ENCODE measurements at regions of chr20 and their contacts with region 1.

Region 1: DNA sequence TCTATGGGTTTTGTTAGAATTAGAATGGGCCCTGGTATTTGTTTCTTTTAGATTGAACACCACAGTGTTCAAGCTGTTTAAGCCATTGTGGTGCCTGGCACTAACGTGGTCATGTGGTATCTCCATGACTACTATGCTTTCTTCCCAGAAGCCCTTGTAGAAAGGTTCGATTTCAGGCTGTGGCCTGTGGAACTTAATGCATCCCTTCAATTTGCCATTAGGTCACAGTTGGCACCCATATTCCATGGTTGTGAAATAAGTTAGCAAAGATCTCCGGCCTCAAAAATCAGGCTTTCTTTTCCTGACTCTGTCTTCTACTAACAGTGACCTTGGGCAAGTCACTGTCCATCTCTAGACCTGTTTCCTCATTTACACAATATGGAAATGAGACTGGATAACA is 31.3 kb upstream of the AAR2 start:
- DNase-seq: no peak
- ATAC-seq: no peak
- H3K4me3 ChIP-seq: no peak overlapping the region
- H3K27ac ChIP-seq: no peak overlapping the region
- H3K4me1 ChIP-seq: peaks cover 0 to 5% (median 0%) of the 10 kb centered on the region in 4 donors
- H3K27me3 ChIP-seq: no peaks in the 10 kb centered on the region
- CTCF ChIP-seq: no peak
- POLR2A ChIP-seq: no peak

Region 2: DNA sequence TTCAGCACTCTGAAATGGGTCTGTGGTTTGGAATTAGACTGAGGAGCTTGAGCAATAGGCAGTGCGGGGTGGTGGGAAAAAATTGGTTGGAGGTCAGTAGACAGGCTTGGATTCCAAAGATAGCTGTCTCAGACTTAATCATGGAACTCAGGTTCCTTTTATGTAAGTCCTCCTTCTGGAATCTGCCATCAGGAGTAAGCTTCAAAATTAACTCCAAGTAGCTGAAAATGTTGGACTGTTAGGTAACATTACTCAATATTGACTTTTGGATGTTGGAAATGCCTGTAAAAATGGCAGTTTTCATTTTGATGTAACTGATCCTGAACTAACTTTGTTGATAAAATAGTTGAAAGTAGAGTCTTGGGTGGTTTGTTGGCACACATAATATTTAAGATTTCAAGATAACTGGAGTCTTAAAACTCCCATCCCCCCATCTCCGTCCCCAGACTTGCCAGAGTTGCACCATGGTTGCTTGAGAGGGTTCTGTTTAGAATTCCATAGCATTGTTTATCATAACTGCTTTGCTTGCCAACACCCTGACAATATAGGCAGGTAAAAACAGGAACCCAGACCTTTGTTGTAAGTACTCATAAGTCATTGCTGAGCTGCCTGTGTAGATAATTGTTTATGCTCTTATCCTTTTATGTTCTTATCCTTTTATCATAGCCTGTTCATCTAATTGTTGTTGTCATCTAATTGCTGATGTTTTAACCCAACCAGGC is 350.2 kb before region 1 on chr20:
- intact Hi-C with region 1: no loop called
- DNase-seq: no peak
- ATAC-seq: peak in 1 of 4 donors; percentile 42
- H3K4me3 ChIP-seq: no peak overlapping the region
- H3K27ac ChIP-seq: no peak overlapping the region
- H3K4me1 ChIP-seq: no peaks in the 10 kb centered on the region
- H3K27me3 ChIP-seq: no peaks in the 10 kb centered on the region
- CTCF ChIP-seq: no peak
- POLR2A ChIP-seq: no peak

Region 3: DNA sequence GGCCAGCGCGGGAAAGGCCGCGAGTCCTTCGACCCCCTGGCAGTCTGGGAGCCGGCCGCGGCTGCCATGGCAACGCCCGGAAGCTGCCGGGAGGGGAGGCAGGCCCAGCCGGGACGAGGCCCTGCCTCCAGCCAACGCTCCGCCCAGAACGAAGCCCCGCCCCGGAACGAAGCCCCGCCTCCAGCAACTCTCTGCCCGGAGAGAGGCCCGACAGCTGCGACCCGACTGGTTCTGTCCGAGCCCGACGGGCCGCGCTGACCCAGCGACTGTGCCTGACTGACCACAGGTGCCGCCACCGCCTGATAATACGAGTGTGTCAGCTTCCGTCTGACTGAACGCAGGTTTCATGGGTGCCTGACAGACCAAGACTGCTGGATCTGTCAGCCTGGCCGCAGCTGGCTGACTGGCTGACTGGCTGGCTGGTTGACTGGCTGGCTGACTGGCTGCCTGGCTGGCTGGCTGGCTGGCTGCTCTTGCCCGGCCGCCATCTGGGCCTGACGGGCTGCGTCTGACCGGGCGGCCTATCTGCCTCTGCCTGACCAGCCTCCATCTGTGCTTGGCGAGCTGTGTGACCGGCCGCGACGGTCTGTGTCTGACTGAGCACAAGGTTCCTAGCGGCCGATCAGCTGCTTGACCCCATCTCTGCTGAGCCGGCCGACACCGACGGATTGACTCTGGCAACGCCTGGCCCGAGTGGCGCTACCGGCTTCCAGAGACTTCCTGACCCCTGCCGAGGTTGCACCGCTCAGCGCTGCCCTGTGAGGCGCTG is 140.2 kb before region 1 on chr20:
- intact Hi-C with region 1: no loop called
- DNase-seq: peak; percentile 98
- ATAC-seq: peak; percentile 97 to 99 (median 99)
- H3K4me3 ChIP-seq: peak overlapping the region; percentile 50 to 65 (median 60)
- H3K27ac ChIP-seq: peak overlapping the region; percentile 81 to 89 (median 83)
- H3K4me1 ChIP-seq: peaks cover 0 to 7% (median 0%) of the 10 kb centered on the region in 4 donors
- H3K27me3 ChIP-seq: no peaks in the 10 kb centered on the region
- CTCF ChIP-seq: no peak
- POLR2A ChIP-seq: peak; percentile 86

Region 4: DNA sequence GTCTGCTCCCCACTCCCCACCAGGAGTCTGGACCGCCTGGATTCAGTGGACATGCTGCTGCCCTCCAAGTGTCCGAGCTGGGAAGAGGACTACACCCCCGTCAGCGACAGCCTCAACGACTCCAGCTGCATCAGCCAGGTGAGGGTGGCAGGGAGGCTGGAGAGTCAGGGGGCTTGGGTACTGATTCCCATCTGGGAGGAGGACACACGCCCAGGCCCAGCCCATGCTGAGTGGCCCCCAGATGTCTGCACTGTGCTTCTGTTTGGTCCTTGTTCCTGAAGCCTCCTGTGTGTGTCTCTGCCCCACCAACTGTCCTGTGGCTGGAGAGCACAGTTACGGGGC is 234.7 kb after region 1 on chr20:
- intact Hi-C with region 1: loop called in 1 of 2 experiments (anchors 5 kb)
- DNase-seq: no peak
- ATAC-seq: no peak
- H3K4me3 ChIP-seq: no peak overlapping the region
- H3K27ac ChIP-seq: no peak overlapping the region
- H3K4me1 ChIP-seq: no peaks in the 10 kb centered on the region
- H3K27me3 ChIP-seq: no peaks in the 10 kb centered on the region
- CTCF ChIP-seq: no peak
- POLR2A ChIP-seq: no peak

Region 5: GRCh38 chr20:36447101-36447500 is 242.1 kb after region 1 on chr20:
- intact Hi-C with region 1: loop called (anchors 5 kb)
- DNase-seq: no peak
- ATAC-seq: no peak
- H3K4me3 ChIP-seq: no peak overlapping the region
- H3K27ac ChIP-seq: no peak overlapping the region
- H3K4me1 ChIP-seq: no peaks in the 10 kb centered on the region
- H3K27me3 ChIP-seq: no peaks in the 10 kb centered on the region
- CTCF ChIP-seq: no peak
- POLR2A ChIP-seq: no peak

Measured in right lobe of liver (tissue), 6 donors.